Adrenal gland (tissue), 19 donors: ENCODE measurements at regions of chr13 and their contacts with region 1.

Region 1: DNA sequence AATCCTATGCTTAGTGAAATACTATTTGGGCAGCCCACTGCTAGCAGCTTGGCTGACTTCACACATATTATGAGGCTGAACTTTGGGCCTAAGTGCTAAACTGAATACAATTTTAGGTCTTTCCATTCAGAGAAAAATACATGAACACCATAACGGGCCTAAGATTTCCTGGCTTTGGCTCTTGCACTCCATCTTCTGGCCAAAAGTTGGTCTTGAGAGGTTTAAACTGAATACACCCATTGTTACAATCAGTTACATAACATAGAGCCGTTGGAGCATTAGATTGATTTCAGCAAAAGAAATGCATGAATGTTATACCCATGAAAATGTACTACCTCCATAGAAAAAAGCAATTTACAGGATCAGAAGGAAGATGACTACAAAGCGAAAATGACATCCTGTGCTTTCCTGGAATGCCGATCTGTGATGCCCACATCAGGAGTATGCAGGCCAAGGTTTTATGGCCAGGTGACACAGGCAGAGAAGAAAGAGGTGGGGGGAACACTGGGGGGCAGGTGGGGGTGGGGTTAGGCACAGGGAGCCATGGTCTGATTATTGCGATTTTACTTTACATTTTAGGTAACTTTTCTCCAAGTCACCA is 11.1 kb upstream of the SHISA2 start:
- DNase-seq: peak; percentile 23 to 69 (median 37)
- H3K4me3 ChIP-seq: no peak overlapping the region
- H3K27ac ChIP-seq: no peak overlapping the region
- H3K4me1 ChIP-seq: no peaks in the 10 kb centered on the region
- H3K27me3 ChIP-seq: no peaks in the 10 kb centered on the region
- CTCF ChIP-seq: peak; percentile 50 to 72 (median 61)
- POLR2A ChIP-seq: no peak

Region 2: GRCh38 chr13:25574437-25575411 is 488.2 kb before region 1 on chr13:
- intact Hi-C with region 1: loop called (anchors 5 to 10 kb)
- DNase-seq: peak; percentile 71 to 94 (median 84)
- H3K4me3 ChIP-seq: no peak overlapping the region
- H3K27ac ChIP-seq: no peak overlapping the region
- H3K4me1 ChIP-seq: no peaks in the 10 kb centered on the region
- H3K27me3 ChIP-seq: no peaks in the 10 kb centered on the region
- CTCF ChIP-seq: peak; percentile 73 to 93 (median 85)
- POLR2A ChIP-seq: no peak

Region 3: DNA sequence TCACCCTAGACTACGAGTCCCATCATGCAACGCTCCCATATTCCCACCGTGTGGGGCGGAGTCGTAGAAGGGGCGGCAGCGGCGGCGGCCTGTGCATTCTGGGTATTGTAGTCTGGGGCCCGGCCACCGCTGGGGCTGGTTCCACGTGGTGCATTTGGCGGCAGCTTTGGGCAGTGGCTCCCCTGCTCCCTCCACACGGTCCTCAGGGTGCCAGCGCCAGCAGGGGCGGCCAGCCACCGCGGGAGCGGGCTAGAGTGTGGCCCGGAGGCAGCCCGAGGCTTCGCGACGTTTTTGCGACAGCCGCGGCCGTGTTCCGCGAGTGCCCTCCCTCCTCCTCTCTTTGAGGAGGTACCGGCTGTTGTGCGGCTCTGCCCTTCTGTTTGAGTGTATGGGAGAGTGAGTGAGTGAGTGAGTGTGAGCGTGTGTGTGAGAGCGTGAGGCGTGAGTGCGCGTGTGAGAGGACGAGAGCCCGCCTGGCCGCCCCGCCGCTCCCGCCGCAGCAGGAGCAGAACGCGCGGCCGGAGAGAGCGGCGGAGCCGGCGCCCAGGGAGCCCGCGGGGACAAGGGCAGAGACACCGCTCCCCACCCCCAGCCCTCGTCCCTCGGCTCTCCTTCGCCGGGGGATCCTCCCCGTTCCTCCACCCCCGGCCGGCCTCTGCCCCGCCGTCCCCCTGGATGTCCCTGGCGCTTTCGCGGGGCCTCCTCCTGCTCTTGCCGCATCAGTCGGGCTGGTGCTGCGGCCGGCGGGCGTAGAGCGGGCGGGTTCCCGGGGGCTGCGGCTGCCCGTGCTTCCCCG is 191.0 kb after region 1 on chr13 and contains the start of gene CDK8:
- intact Hi-C with region 1: no loop called
- DNase-seq: peak; percentile 87 to 92 (median 89)
- H3K4me3 ChIP-seq: peak within 1 kb of the TSS; percentile 35 to 93 (median 83)
- H3K27ac ChIP-seq: peak within 1 kb of the TSS; percentile 83 to 94 (median 90)
- H3K4me1 ChIP-seq: peaks cover 9 to 22% of the 10 kb centered on the region in 2 donors
- H3K27me3 ChIP-seq: no peaks in the 10 kb centered on the region
- CTCF ChIP-seq: no peak
- POLR2A ChIP-seq: peak; percentile 31 to 83
- total RNA-seq, gene CDK8: 7.7 to 65.4 (median 11.1) TPM